BJ (cell line): ENCODE measurements at regions of chrX and their contacts with region 1.

Region 1: GRCh38 chrX:68018681-68019111 is 414.6 kb downstream of the OPHN1 start:
- DNase-seq: no peak
- H3K4me3 ChIP-seq: no peak overlapping the region
- H3K27me3 ChIP-seq: no peaks in the 10 kb centered on the region
- CTCF ChIP-seq: peak; percentile 74

Region 2: DNA sequence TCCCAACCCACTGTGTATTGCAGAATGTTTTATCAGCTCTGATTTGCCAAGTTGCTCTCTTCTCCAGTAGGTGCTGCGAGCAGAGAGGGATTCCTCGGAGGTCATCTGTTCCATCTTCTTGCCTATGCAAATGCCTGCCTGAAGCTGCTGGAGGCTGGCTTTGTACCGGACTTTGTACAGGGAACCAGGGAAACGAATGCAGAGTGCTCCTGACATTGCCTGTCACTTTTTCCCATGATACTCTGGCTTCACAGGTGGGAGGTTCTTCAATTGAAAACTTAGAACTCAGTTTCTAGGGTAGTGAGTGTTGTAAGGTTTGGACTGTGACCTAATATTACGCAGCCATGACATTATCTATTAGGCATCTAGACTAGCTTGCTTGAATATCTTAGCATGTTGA is 449.9 kb before region 1 on chrX:
- CTCF ChIA-PET with region 1: no interaction called
- POLR2A ChIA-PET with region 1: no interaction called
- DNase-seq: no peak
- H3K4me3 ChIP-seq: no peak overlapping the region
- H3K27me3 ChIP-seq: no peaks in the 10 kb centered on the region
- CTCF ChIP-seq: no peak

Region 3: DNA sequence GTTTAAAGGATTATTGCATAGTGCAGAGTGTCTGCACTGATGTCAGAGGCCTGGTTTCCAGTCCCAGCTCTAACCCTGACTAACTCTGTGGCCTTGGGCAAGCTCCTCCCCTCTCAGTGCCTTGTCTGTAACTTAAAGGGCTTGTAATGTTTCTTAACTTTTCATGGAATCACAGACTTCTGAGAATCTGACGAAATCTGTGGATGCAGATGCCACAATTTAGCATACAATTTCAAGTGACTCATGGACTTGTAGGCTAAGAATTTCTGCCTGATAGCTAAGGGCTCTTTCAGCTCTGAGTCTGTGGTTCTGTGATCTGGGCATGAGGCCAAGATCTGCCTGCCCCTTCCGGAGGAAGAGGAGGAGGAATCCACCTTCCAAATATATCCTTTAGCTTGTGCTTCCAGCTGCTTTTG is 238.0 kb before region 1 on chrX:
- CTCF ChIA-PET with region 1: no interaction called
- POLR2A ChIA-PET with region 1: no interaction called
- DNase-seq: peak; percentile 96
- H3K4me3 ChIP-seq: no peak overlapping the region
- H3K27me3 ChIP-seq: no peaks in the 10 kb centered on the region
- CTCF ChIP-seq: no peak

Region 4: GRCh38 chrX:68045008-68045577 is 26.4 kb after region 1 on chrX:
- CTCF ChIA-PET with region 1: no interaction called
- POLR2A ChIA-PET with region 1: no interaction called
- DNase-seq: no peak
- H3K4me3 ChIP-seq: no peak overlapping the region
- H3K27me3 ChIP-seq: no peaks in the 10 kb centered on the region
- CTCF ChIP-seq: no peak

Region 5: GRCh38 chrX:68090275-68090674 is 71.6 kb after region 1 on chrX:
- CTCF ChIA-PET with region 1: interaction called, 36 read pairs
- POLR2A ChIA-PET with region 1: no interaction called
- DNase-seq: no peak
- H3K4me3 ChIP-seq: no peak overlapping the region
- H3K27me3 ChIP-seq: no peaks in the 10 kb centered on the region
- CTCF ChIP-seq: no peak; the same call in 1 of the 2 replicates

Region 6: GRCh38 chrX:68146054-68146453 is 127.4 kb after region 1 on chrX:
- CTCF ChIA-PET with region 1: interaction called, 30 read pairs
- POLR2A ChIA-PET with region 1: no interaction called
- DNase-seq: no peak
- H3K4me3 ChIP-seq: no peak overlapping the region
- H3K27me3 ChIP-seq: no peaks in the 10 kb centered on the region
- CTCF ChIP-seq: peak; percentile 44